ENCODE measurements at regions of chr12 and their contacts with region 1.

Region 1: GRCh38 chr12:8980137-8980536 is 9.2 kb upstream of the KLRG1 start:
- DNase-seq: no peak
- ATAC-seq: no peak
- H3K4me3 ChIP-seq: no peak overlapping the region
- H3K4me3 Mint-ChIP-seq: no peak overlapping the region
- H3K27ac ChIP-seq: no peak overlapping the region
- H3K27ac Mint-ChIP-seq: peak overlapping the region in 3 of 9 donors; percentile 16 to 49 (median 28)
- H3K4me1 ChIP-seq: no peaks in the 10 kb centered on the region
- H3K4me1 Mint-ChIP-seq: peaks cover 0 to 29% (median 20%) of the 10 kb centered on the region in 7 donors
- H3K27me3 ChIP-seq: no peaks in the 10 kb centered on the region
- H3K27me3 Mint-ChIP-seq: peaks cover 0 to 1% (median 0%) of the 10 kb centered on the region in 5 donors

Region 2: GRCh38 chr12:8960176-8960575 is 20.0 kb before region 1 on chr12:
- CTCF ChIA-PET with region 1: no interaction called
- POLR2A ChIA-PET with region 1: interaction called, 7 read pairs
- intact Hi-C with region 1: loop called in 1 of 2 experiments (anchors 2 kb)
- DNase-seq: peak in 7 of 9 donors; percentile 42 to 68 (median 57)
- ATAC-seq: peak; percentile 94
- H3K4me3 ChIP-seq: peak overlapping the region; percentile 12
- H3K4me3 Mint-ChIP-seq: peak overlapping the region in 9 of 10 donors; percentile 54 to 84 (median 69)
- H3K27ac ChIP-seq: peak overlapping the region; percentile 52
- H3K27ac Mint-ChIP-seq: peak overlapping the region in 8 of 9 donors; percentile 69 to 99 (median 94)
- H3K4me1 ChIP-seq: peaks cover 46 to 69% of the 10 kb centered on the region in 2 donors
- H3K4me1 Mint-ChIP-seq: peaks cover 6 to 93% (median 75%) of the 10 kb centered on the region in 7 donors
- H3K27me3 ChIP-seq: no peaks in the 10 kb centered on the region
- H3K27me3 Mint-ChIP-seq: peaks cover 0 to 5% (median 0%) of the 10 kb centered on the region in 5 donors

Region 3: GRCh38 chr12:9049520-9050133 is 69.5 kb after region 1 on chr12:
- CTCF ChIA-PET with region 1: no interaction called
- POLR2A ChIA-PET with region 1: no interaction called
- intact Hi-C with region 1: no loop called
- DNase-seq: peak in 7 of 9 donors; percentile 41 to 71 (median 57)
- ATAC-seq: peak; percentile 84
- H3K4me3 ChIP-seq: no peak overlapping the region
- H3K4me3 Mint-ChIP-seq: no peak overlapping the region
- H3K27ac ChIP-seq: no peak overlapping the region
- H3K27ac Mint-ChIP-seq: peak overlapping the region in 4 of 9 donors; percentile 31 to 70 (median 40)
- H3K4me1 ChIP-seq: peaks cover 5 to 6% of the 10 kb centered on the region in 2 donors
- H3K4me1 Mint-ChIP-seq: peaks cover 2 to 32% (median 13%) of the 10 kb centered on the region in 7 donors
- H3K27me3 ChIP-seq: no peaks in the 10 kb centered on the region
- H3K27me3 Mint-ChIP-seq: peaks cover 0 to 4% (median 0%) of the 10 kb centered on the region in 5 donors